B cell (primary cell): ENCODE measurements at regions of chr21 and their contacts with region 1.

Region 1: DNA sequence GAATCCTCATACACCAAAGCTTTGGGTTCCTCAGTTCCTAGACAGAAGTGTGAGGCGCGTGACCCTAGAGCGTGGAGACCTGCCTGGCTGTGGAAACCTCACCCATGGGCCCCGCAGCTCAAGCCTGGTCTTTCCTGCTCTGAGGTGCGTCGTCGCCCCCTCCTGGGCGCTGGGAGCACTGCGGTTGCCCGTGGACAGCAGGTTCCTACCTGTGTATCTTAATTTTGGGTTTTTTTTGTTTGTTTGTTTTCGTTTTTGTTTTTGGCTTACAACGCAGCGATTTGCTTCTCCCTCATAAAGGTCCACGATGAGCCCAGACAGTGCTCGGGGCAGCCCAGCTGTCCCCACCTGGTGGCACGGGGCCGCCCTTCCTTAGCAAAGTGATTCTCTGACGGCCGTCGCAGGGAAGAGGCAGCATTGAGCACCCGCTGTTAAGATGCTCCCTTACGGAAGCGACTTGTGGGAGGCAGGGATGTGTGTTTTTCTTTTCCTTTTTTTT is 36.6 kb upstream of the TRAPPC10 start:
- DNase-seq: peak; percentile 83
- ATAC-seq: peak; percentile 97
- H3K4me3 ChIP-seq: no peak overlapping the region
- H3K4me3 Mint-ChIP-seq: no peak overlapping the region
- H3K27ac ChIP-seq: no peak overlapping the region
- H3K27ac Mint-ChIP-seq: no peak overlapping the region
- H3K4me1 ChIP-seq: peaks cover 0 to 6% of the 10 kb centered on the region in 2 donors
- H3K4me1 Mint-ChIP-seq: peaks cover 8% of the 10 kb centered on the region
- H3K27me3 ChIP-seq: no peaks in the 10 kb centered on the region
- H3K27me3 Mint-ChIP-seq: no peaks in the 10 kb centered on the region
- CTCF ChIP-seq: peak; percentile 93

Region 2: GRCh38 chr21:43988506-43989230 is 13.1 kb after region 1 on chr21:
- CTCF ChIA-PET with region 1: interaction called, 10 read pairs
- POLR2A ChIA-PET with region 1: no interaction called
- intact Hi-C with region 1: no loop called
- DNase-seq: no peak
- ATAC-seq: no peak
- H3K4me3 ChIP-seq: no peak overlapping the region
- H3K4me3 Mint-ChIP-seq: no peak overlapping the region
- H3K27ac ChIP-seq: no peak overlapping the region
- H3K27ac Mint-ChIP-seq: no peak overlapping the region
- H3K4me1 ChIP-seq: no peaks in the 10 kb centered on the region
- H3K4me1 Mint-ChIP-seq: peaks cover 8% of the 10 kb centered on the region
- H3K27me3 ChIP-seq: peaks cover 0 to 5% (median 0%) of the 10 kb centered on the region in 4 experiments
- H3K27me3 Mint-ChIP-seq: no peaks in the 10 kb centered on the region
- CTCF ChIP-seq: no peak

Region 3: DNA sequence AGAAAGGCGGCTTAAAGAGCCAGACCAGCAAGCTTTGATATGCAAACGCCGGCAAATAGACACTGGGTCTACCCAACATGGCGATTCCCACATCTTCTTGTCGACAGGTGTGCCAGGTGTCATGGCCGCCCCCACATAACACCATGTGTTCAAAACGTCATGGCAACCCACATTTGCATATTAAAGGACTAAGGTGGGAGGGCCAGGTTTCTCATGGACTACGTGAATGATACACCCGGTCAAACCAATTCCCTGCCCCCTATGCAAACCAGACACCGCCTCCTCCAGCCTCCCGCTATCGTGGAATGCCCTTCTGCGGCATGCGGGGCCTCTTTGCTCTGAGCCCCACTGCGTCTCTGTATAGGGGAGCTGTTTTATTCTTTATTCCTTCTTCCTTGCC is 223.9 kb after region 1 on chr21:
- CTCF ChIA-PET with region 1: no interaction called
- POLR2A ChIA-PET with region 1: no interaction called
- intact Hi-C with region 1: no loop called
- DNase-seq: peak; percentile 54
- ATAC-seq: no peak
- H3K4me3 ChIP-seq: no peak overlapping the region
- H3K4me3 Mint-ChIP-seq: no peak overlapping the region
- H3K27ac ChIP-seq: no peak overlapping the region
- H3K27ac Mint-ChIP-seq: peak overlapping the region; percentile 59
- H3K4me1 ChIP-seq: peaks cover 0 to 12% of the 10 kb centered on the region in 2 donors
- H3K4me1 Mint-ChIP-seq: peaks cover 19% of the 10 kb centered on the region
- H3K27me3 ChIP-seq: no peaks in the 10 kb centered on the region
- H3K27me3 Mint-ChIP-seq: no peaks in the 10 kb centered on the region
- CTCF ChIP-seq: no peak